ENCODE measurements at regions of chr6 and their contacts with region 1.

Region 1: GRCh38 chr6:73515204-73515655 is 5.6 kb downstream of the EEF1A1 start:
- DNase-seq: peak; percentile 19
- H3K4me3 Mint-ChIP-seq: peak overlapping the region; percentile 98
- H3K27ac Mint-ChIP-seq: peak overlapping the region; percentile 87
- H3K4me1 Mint-ChIP-seq: peaks cover 46% of the 10 kb centered on the region
- H3K27me3 Mint-ChIP-seq: peaks cover 10% of the 10 kb centered on the region

Region 2: DNA sequence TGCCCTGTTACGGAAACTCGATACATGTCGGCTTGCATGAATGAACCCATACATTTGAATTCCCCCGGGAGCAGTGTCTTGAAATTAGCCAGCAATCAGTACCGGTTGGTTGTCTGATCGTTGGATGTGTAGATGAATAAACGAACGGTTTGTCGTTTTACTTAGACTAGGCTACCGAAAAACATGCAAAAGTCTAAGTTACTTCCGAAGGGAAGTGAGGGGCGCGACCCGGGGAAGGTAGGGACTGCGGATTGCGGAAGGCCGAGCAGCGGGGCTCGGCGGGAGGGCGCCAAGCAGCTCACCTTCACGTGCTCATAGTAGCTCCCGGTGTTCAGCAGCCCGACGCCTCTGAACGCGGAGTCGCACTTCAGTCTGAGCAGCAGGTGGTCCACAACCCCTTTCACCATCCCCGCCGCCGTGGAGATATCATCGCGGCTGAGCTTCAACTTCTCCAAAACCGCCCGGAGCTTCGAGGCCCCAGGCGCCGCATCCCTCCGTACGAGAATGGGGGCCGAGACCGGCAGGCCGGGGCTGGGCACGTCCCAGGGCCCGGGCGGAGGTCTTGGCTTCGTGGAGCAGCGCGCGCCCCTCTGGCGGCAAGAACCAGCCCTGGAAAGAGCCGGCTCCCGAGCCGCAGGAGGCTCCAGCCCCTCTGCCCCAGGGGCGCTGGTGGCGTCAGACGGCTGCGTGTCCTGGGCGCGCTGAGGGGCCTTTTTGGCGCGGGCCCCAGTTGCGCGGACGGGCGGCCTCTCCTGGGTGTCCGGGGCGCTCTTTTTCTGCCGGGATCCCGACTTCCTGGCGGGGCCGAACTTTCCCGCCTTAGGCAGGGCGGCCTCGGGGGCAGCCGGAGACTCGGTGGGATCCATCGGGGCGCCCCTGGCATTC is 63.8 kb before region 1 on chr6:
- CTCF ChIA-PET with region 1: no interaction called
- POLR2A ChIA-PET with region 1: interaction called, 82 read pairs
- intact Hi-C with region 1: no loop called
- DNase-seq: peak; percentile 61
- H3K4me3 Mint-ChIP-seq: peak overlapping the region; percentile 86
- H3K27ac Mint-ChIP-seq: peak overlapping the region; percentile 93
- H3K4me1 Mint-ChIP-seq: peaks cover 18% of the 10 kb centered on the region
- H3K27me3 Mint-ChIP-seq: no peaks in the 10 kb centered on the region

Region 3: DNA sequence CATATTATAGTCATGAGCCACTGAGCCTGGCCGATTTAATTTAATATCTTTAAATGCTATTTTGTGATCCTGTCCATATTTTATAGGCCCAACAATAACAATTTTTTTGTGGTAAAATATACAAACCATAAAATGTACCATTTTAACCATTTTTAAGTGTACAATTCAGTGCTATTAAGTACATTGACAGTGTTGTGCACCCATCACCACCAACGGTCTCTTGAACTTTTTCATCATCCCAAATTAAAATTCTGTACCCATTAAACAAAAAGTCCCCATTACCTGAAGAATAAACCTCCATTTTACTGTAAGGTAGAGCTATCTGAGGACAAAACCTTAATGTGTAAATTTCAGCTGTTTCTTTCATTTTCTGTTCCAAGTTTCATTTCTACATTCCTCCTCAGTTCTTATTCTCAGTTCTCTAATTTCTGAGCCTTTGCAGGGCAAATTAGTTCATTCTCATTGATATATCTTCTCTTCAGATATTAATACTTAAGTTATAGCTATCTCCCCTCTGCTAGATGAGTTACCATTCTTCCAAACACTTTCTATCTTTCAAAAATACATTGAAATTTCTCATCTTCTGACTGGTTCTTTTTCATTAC is 43.4 kb before region 1 on chr6:
- CTCF ChIA-PET with region 1: no interaction called
- POLR2A ChIA-PET with region 1: interaction called, 11 read pairs
- intact Hi-C with region 1: no loop called
- DNase-seq: no peak
- H3K4me3 Mint-ChIP-seq: peak overlapping the region; percentile 31
- H3K27ac Mint-ChIP-seq: peak overlapping the region; percentile 56
- H3K4me1 Mint-ChIP-seq: peaks cover 22% of the 10 kb centered on the region
- H3K27me3 Mint-ChIP-seq: no peaks in the 10 kb centered on the region

Region 4: DNA sequence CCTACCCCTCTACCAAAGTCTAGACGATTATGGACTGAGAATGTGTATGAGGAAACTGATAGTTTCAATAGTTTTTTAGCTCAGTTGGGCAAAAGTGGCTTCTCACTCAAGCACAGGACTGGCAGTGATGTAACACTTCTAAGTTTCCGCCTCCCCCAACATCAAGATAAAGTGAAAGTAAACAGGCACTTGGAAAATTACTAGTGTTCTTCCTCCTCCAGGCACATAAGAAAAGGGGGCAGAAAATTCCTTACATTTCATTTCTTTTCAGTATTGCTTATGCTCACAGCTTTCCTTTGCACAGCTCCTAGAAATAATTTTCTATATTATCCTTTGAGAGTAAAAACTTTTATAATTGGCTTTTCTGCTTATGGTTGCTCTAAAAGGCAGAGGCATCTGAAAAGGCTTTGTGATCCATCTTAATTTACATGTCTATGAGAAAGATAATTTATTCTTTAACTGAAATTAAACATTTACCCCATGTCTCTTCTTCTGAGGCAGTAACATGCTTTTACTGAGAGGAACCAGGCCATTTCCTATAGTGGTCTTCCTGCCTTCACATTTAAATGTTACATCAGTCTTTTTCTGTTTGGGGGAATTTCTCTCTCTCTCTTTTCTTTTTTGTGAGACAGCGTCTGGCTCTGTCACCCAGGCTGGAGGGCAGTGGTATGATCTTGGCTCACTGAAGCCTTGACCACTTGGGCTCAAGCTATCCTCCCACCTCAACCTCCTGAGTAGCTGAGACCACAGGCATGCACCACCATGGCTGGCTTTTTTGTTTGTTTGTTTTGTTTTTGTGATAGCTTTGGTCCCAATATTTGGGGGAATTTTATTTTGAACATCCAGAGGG is 70.6 kb after region 1 on chr6:
- CTCF ChIA-PET with region 1: interaction called, 5 read pairs
- POLR2A ChIA-PET with region 1: interaction called, 67 read pairs
- intact Hi-C with region 1: loop called (anchors 1 kb)
- DNase-seq: peak; percentile 45
- H3K4me3 Mint-ChIP-seq: peak overlapping the region; percentile 75
- H3K27ac Mint-ChIP-seq: peak overlapping the region; percentile 95
- H3K4me1 Mint-ChIP-seq: peaks cover 24% of the 10 kb centered on the region
- H3K27me3 Mint-ChIP-seq: peaks cover 2% of the 10 kb centered on the region

Region 5: GRCh38 chr6:73653571-73654424 is 138.6 kb after region 1 on chr6 and contains the start of gene SLC17A5:
- CTCF ChIA-PET with region 1: interaction called, 15 read pairs
- POLR2A ChIA-PET with region 1: interaction called, 51 read pairs
- intact Hi-C with region 1: loop called (anchors 1 kb)
- DNase-seq: peak; percentile 94
- H3K4me3 Mint-ChIP-seq: peak within 1 kb of the TSS; percentile 97
- H3K27ac Mint-ChIP-seq: peak within 1 kb of the TSS; percentile 95
- H3K4me1 Mint-ChIP-seq: peaks cover 23% of the 10 kb centered on the region
- H3K27me3 Mint-ChIP-seq: no peaks in the 10 kb centered on the region
- total RNA-seq, gene SLC17A5: 5.1 to 5.4 TPM

Measured in activated CD4-positive, alpha-beta memory T cell treated with anti-CD3 and anti-CD28 coated beads for 36 hours (primary cell).